ENCODE measurements at regions of chr16 and their contacts with region 1.

Region 1: DNA sequence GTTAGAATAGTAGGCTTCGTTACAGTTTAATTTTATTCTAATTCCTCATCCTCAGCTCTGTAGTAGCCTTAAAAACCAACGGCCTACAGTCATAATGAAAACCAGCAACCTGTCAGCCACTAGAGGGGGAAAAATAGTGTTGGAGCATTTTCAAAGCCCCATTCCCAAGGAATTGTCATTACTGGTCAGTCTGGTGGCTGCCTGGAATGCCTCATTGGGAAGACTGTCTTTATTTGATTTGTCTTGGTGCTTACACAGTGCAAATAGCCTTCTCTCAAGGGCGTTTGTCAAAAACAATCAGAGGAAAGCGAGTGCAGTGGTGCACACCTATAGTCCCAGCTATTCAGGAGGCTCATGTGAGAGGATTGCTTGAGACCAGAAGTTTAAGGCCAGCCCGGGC is 4.7 kb downstream of the LPCAT2 start:
- DNase-seq: no peak
- H3K4me3 Mint-ChIP-seq: no peak overlapping the region
- H3K27ac Mint-ChIP-seq: no peak overlapping the region
- H3K4me1 Mint-ChIP-seq: peaks cover 8% of the 10 kb centered on the region
- H3K27me3 Mint-ChIP-seq: peaks cover 46% of the 10 kb centered on the region

Region 2: GRCh38 chr16:55492756-55493380 is 20.7 kb before region 1 on chr16:
- CTCF ChIA-PET with region 1: no interaction called
- POLR2A ChIA-PET with region 1: no interaction called
- DNase-seq: no peak
- H3K4me3 Mint-ChIP-seq: no peak overlapping the region
- H3K27ac Mint-ChIP-seq: no peak overlapping the region
- H3K4me1 Mint-ChIP-seq: no peaks in the 10 kb centered on the region
- H3K27me3 Mint-ChIP-seq: no peaks in the 10 kb centered on the region

Region 3: DNA sequence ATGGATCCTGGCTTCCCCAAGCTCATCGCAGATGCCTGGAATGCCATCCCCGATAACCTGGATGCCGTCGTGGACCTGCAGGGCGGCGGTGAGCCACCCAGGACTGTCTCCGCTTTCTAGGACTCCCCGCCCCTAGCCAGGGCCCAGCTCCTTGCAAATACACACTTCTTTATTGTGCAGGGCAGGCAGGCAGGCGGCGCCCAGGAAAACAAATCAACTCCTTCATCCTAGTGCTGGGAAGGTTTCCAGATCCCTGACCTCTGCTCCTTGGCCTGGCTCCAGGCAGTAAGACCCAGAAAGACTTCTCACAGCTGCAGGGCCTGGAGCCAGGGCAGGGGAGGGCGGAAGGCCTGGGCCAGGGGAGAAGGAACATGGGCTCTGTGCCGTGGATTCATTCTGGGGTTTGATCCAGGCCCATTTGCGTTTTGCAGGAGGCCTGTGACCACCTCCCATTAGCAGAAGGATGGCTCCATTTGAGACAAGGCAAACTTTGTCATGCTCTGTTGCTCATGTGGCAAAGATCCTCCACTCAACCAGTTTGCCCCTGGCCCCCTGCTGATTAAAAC is 10.7 kb before region 1 on chr16:
- CTCF ChIA-PET with region 1: interaction called, 10 read pairs
- POLR2A ChIA-PET with region 1: no interaction called
- DNase-seq: no peak
- H3K4me3 Mint-ChIP-seq: no peak overlapping the region
- H3K27ac Mint-ChIP-seq: no peak overlapping the region
- H3K4me1 Mint-ChIP-seq: peaks cover 18% of the 10 kb centered on the region
- H3K27me3 Mint-ChIP-seq: no peaks in the 10 kb centered on the region

Region 4: DNA sequence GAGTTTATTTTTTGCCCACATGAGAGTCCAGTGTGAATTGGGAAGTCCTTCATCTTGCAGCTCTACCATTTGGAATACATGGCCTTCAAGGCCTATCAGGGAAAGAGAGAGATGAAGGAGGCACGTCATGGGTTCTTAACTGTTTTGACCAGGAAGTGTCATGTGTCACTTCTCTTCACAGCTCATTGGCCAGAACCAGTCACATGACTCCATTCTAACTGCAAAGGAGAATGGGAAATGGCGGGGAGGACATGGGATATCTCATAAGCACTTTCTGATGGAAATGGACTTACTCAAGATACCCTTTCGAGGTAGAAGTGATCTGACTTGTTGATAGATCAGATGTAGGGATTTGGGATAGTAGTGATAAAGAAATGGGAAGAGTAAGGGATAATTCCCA is 419.4 kb after region 1 on chr16:
- CTCF ChIA-PET with region 1: no interaction called
- POLR2A ChIA-PET with region 1: no interaction called
- DNase-seq: no peak
- H3K4me3 Mint-ChIP-seq: no peak overlapping the region
- H3K27ac Mint-ChIP-seq: no peak overlapping the region
- H3K4me1 Mint-ChIP-seq: no peaks in the 10 kb centered on the region
- H3K27me3 Mint-ChIP-seq: no peaks in the 10 kb centered on the region

Measured in activated CD4-positive, alpha-beta T cell treated with anti-CD3 and anti-CD28 coated beads, Interleukin-2, amount 10 ng/mL, durations not matched to agents 7 days and 5 days (primary cell).